CD4-positive, alpha-beta memory T cell (primary cell): ENCODE measurements at regions of chr16 and their contacts with region 1.

Region 1: DNA sequence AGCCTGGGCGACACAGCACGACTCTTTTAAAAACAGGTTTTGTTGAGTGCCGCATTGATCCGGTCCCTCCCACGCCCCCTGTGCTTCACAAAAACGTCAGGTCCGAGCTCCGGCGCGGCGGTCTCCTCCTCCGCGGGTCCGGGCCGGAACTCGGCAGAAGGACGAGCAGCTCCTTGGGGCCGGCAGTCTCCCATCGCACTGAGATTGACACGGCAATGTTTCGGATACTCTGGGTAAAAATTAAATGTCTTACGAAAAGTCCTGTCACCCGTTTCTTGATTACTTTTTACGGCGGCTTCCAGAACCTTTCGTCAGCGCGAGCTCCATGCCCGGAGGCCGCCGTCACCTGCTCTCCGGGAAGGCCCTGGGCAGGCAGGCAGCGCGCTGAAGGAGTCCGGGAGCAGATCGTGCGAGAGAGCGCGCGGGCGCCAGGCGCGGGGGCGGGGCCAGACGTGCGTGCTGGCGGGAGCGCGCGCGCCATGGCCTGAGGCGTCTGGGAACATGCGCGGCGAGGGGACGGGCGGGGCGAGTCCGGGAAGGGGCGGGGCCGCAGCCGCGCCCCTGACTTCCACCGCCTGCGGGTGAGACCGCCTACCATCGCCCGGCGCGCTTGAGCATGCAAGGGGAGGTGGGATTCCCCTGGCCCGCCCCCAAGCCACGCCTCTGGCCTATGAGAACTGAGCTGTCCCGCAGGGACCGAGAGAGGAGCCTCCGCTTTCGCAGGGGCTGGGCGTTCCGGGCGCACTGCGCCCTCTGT is 11.7 kb upstream of the SRL start:
- DNase-seq: peak; percentile 98 to 100 (median 100)
- H3K4me3 ChIP-seq: peak overlapping the region; percentile 57 to 85
- H3K4me3 Mint-ChIP-seq: peak overlapping the region; percentile 90 to 96 (median 93)
- H3K27ac ChIP-seq: peak overlapping the region; percentile 86
- H3K27ac Mint-ChIP-seq: peak overlapping the region; percentile 91 to 97 (median 96)
- H3K4me1 ChIP-seq: peaks cover 9% of the 10 kb centered on the region
- H3K4me1 Mint-ChIP-seq: peaks cover 5 to 10% (median 8%) of the 10 kb centered on the region in 4 donors
- H3K27me3 ChIP-seq: no peaks in the 10 kb centered on the region
- H3K27me3 Mint-ChIP-seq: no peaks in the 10 kb centered on the region

Region 2: DNA sequence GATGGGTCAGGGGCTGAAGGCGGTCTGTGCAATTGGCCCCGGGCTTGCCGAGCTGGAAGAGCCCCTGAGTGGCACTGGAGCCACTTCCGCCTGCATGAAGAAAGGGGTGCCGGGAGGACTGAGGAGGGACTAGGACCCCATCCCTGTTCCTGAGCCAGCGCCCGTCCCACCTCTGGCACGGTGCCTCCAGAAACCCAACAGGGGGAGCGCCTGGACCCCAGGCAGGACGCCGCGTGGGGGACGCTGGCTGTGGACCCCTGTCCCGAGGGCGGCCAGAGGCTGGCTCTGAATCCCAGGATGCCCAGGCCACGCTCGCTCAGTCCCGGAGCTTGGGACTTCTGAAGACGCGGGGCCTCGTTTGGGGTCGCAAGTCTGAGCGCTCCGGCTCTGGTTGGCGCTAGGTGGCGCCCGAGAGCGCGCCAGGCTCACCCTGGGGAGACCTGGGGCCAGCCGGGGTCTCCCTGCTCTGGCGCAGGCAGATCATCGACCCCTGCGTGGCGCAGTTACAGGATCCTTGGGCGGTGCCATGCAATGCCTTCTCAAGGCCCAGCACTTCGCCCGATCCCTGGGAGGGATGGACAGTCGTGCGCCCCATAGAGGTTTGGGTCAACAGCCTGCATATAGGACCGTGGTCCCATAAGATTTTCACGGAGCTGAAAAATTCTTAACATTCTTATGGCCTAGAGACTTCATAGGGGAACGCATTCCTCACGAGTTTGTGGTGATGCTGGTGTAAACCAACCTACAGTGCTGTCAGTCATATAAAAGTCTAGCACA is 314.5 kb before region 1 on chr16:
- CTCF ChIA-PET with region 1: interaction called, 37 read pairs
- POLR2A ChIA-PET with region 1: interaction called, 16 read pairs
- intact Hi-C with region 1: loop called (anchors 1 kb)
- DNase-seq: peak in 4 of 5 donors; percentile 56 to 64 (median 64)
- H3K4me3 ChIP-seq: peak overlapping the region in 1 of 2 donors; percentile 51
- H3K4me3 Mint-ChIP-seq: peak overlapping the region in 4 of 8 donors; percentile 31 to 72 (median 52)
- H3K27ac ChIP-seq: no peak overlapping the region
- H3K27ac Mint-ChIP-seq: no peak overlapping the region
- H3K4me1 ChIP-seq: peaks cover 12% of the 10 kb centered on the region
- H3K4me1 Mint-ChIP-seq: peaks cover 0 to 2% (median 0%) of the 10 kb centered on the region in 4 donors
- H3K27me3 ChIP-seq: no peaks in the 10 kb centered on the region
- H3K27me3 Mint-ChIP-seq: no peaks in the 10 kb centered on the region

Region 3: DNA sequence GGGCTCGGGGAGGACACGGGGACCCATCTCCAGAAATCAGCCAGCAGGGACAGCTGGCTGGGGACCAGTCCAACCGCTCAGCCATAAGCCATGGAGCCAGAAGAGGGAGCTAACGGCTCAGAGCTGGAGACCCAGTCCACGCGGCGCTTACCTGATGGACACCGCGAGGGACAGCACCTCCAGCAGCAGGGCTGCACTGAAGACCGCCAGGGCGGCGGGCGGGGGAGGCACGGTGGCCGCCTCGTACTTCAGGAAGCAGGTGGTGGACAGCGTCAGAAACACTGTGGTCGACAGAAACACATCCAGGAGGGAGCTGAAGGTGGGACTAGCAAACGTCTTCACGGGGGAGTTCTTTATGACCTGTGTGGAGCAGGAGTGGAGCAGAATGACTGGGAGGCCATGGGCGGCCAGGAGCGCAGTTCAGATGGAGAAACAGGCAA is 270.5 kb before region 1 on chr16:
- CTCF ChIA-PET with region 1: interaction called, 25 read pairs
- POLR2A ChIA-PET with region 1: interaction called, 4 read pairs
- intact Hi-C with region 1: no loop called
- DNase-seq: peak in 4 of 5 donors; percentile 17 to 33 (median 30)
- H3K4me3 ChIP-seq: no peak overlapping the region
- H3K4me3 Mint-ChIP-seq: no peak overlapping the region
- H3K27ac ChIP-seq: no peak overlapping the region
- H3K27ac Mint-ChIP-seq: peak overlapping the region in 1 of 7 donors; percentile 69
- H3K4me1 ChIP-seq: no peaks in the 10 kb centered on the region
- H3K4me1 Mint-ChIP-seq: peaks cover 3 to 7% (median 4%) of the 10 kb centered on the region in 4 donors
- H3K27me3 ChIP-seq: no peaks in the 10 kb centered on the region
- H3K27me3 Mint-ChIP-seq: no peaks in the 10 kb centered on the region

Region 4: GRCh38 chr16:4240624-4241023 is 12.9 kb before region 1 on chr16:
- CTCF ChIA-PET with region 1: interaction called, 14 read pairs
- POLR2A ChIA-PET with region 1: interaction called, 3 read pairs
- intact Hi-C with region 1: no loop called
- DNase-seq: no peak
- H3K4me3 ChIP-seq: no peak overlapping the region
- H3K4me3 Mint-ChIP-seq: no peak overlapping the region
- H3K27ac ChIP-seq: no peak overlapping the region
- H3K27ac Mint-ChIP-seq: no peak overlapping the region
- H3K4me1 ChIP-seq: no peaks in the 10 kb centered on the region
- H3K4me1 Mint-ChIP-seq: no peaks in the 10 kb centered on the region
- H3K27me3 ChIP-seq: no peaks in the 10 kb centered on the region
- H3K27me3 Mint-ChIP-seq: peaks cover 4 to 7% of the 10 kb centered on the region in 2 donors

Region 5: GRCh38 chr16:4307215-4308037 is 53.9 kb after region 1 on chr16:
- CTCF ChIA-PET with region 1: interaction called, 13 read pairs
- POLR2A ChIA-PET with region 1: interaction called, 15 read pairs
- intact Hi-C with region 1: loop called (anchors 1 kb)
- DNase-seq: peak; percentile 97 to 99 (median 98)
- H3K4me3 ChIP-seq: peak overlapping the region; percentile 47 to 85
- H3K4me3 Mint-ChIP-seq: peak overlapping the region; percentile 87 to 97 (median 92)
- H3K27ac ChIP-seq: peak overlapping the region; percentile 76
- H3K27ac Mint-ChIP-seq: peak overlapping the region; percentile 96 to 100 (median 99)
- H3K4me1 ChIP-seq: peaks cover 18% of the 10 kb centered on the region
- H3K4me1 Mint-ChIP-seq: peaks cover 17 to 33% (median 20%) of the 10 kb centered on the region in 4 donors
- H3K27me3 ChIP-seq: no peaks in the 10 kb centered on the region
- H3K27me3 Mint-ChIP-seq: no peaks in the 10 kb centered on the region